CD4-positive, alpha-beta T cell (primary cell): ENCODE measurements at regions of chr19 and their contacts with region 1.

Region 1: DNA sequence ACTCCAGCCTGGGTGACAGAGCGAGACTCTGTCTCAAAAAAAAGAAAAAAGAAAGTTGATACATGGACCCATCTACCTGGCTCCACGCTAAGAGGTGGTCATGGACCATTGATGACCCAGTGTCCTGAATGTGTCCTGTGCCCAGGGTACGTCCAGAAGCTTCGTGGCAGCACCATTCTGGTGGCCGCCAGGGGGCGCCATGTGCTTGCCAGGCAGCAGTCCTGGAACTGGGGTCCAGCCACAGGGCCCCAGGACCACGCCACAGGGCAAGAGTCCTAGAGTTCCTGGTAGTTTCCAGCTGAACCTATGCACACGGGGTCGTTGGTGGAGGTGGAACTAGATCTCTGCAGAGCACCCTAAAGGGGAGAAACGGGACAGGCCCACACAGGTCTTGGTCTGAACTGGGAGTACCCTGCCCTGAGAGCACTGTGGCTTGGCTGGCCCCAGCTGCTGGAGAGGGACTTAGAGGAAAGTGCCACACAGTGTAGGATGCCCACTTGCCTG is 19.9 kb upstream of the FBXO27 start:
- DNase-seq: peak; percentile 46 to 83 (median 66)
- ATAC-seq: peak; percentile 41
- H3K4me3 ChIP-seq: no peak overlapping the region
- H3K4me3 Mint-ChIP-seq: no peak overlapping the region
- H3K27ac ChIP-seq: no peak overlapping the region
- H3K27ac Mint-ChIP-seq: no peak overlapping the region
- H3K4me1 ChIP-seq: peaks cover 6% of the 10 kb centered on the region
- H3K4me1 Mint-ChIP-seq: no peaks in the 10 kb centered on the region
- H3K27me3 ChIP-seq: no peaks in the 10 kb centered on the region
- H3K27me3 Mint-ChIP-seq: peaks cover 4% of the 10 kb centered on the region
- CTCF ChIP-seq: peak; percentile 88

Region 2: GRCh38 chr19:39110263-39110967 is 58.1 kb after region 1 on chr19:
- CTCF ChIA-PET with region 1: interaction called, 3 read pairs
- POLR2A ChIA-PET with region 1: no interaction called
- intact Hi-C with region 1: loop called (anchors 2 to 5 kb)
- DNase-seq: peak; percentile 53 to 84 (median 74)
- ATAC-seq: peak; percentile 77
- H3K4me3 ChIP-seq: no peak overlapping the region
- H3K4me3 Mint-ChIP-seq: no peak overlapping the region
- H3K27ac ChIP-seq: no peak overlapping the region
- H3K27ac Mint-ChIP-seq: no peak overlapping the region
- H3K4me1 ChIP-seq: peaks cover 4% of the 10 kb centered on the region
- H3K4me1 Mint-ChIP-seq: peaks cover 4% of the 10 kb centered on the region
- H3K27me3 ChIP-seq: no peaks in the 10 kb centered on the region
- H3K27me3 Mint-ChIP-seq: peaks cover 8% of the 10 kb centered on the region
- CTCF ChIP-seq: peak; percentile 80

Region 3: GRCh38 chr19:39187559-39187957 is 135.3 kb after region 1 on chr19:
- CTCF ChIA-PET with region 1: interaction called, 3 read pairs
- POLR2A ChIA-PET with region 1: no interaction called
- intact Hi-C with region 1: loop called in 1 of 2 experiments (anchors 2 kb)
- DNase-seq: no peak
- ATAC-seq: no peak
- H3K4me3 ChIP-seq: no peak overlapping the region
- H3K4me3 Mint-ChIP-seq: no peak overlapping the region
- H3K27ac ChIP-seq: no peak overlapping the region
- H3K27ac Mint-ChIP-seq: no peak overlapping the region
- H3K4me1 ChIP-seq: no peaks in the 10 kb centered on the region
- H3K4me1 Mint-ChIP-seq: no peaks in the 10 kb centered on the region
- H3K27me3 ChIP-seq: peaks cover 0 to 2% of the 10 kb centered on the region in 2 experiments
- H3K27me3 Mint-ChIP-seq: peaks cover 18% of the 10 kb centered on the region
- CTCF ChIP-seq: peak; percentile 28

Region 4: GRCh38 chr19:39328046-39328705 is 275.9 kb after region 1 on chr19:
- CTCF ChIA-PET with region 1: interaction called, 3 read pairs
- POLR2A ChIA-PET with region 1: no interaction called
- intact Hi-C with region 1: loop called in 1 of 2 experiments (anchors 5 kb)
- DNase-seq: peak; percentile 71 to 89 (median 80)
- ATAC-seq: peak; percentile 82
- H3K4me3 ChIP-seq: no peak overlapping the region
- H3K4me3 Mint-ChIP-seq: peak overlapping the region; percentile 68
- H3K27ac ChIP-seq: no peak overlapping the region
- H3K27ac Mint-ChIP-seq: peak overlapping the region; percentile 83
- H3K4me1 ChIP-seq: peaks cover 63% of the 10 kb centered on the region
- H3K4me1 Mint-ChIP-seq: peaks cover 33% of the 10 kb centered on the region
- H3K27me3 ChIP-seq: no peaks in the 10 kb centered on the region
- H3K27me3 Mint-ChIP-seq: no peaks in the 10 kb centered on the region
- CTCF ChIP-seq: peak; percentile 98